ENCODE measurements at regions of chr7 and their contacts with region 1.

Region 1: DNA sequence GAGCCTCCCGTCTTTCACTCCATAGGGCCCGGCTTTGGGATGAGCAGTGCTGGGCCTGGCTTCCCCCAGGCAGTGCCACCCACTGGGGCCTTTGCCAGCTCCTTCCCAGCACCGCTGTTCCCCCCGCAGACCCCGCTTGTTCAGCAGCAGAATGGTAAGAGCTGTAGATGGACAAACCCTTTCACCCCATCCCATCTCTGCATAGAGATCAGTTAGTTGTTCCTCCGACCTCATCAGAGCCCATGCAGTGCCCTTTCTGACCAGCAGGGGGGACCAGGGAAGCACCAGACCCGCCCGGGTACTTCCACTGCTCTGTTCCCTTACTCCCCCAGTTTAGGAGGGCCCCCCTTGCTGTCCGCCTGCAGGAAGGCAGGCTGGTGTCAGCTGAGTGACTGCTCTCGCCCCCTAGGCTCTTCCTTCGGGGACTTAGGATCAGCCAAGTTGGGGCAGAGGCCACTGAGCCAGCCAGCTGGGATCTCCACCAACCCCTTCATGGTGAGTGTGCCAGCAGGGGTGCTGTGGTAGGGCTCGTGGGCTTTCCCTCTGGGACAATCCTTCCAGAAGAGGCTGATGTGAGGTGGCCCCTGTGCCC is 9.8 kb downstream of the SAP25 start:
- DNase-seq: peak; percentile 43
- H3K4me3 ChIP-seq: no peak overlapping the region
- H3K27ac ChIP-seq: no peak overlapping the region
- H3K4me1 ChIP-seq: no peaks in the 10 kb centered on the region
- H3K27me3 ChIP-seq: no peaks in the 10 kb centered on the region
- CTCF ChIP-seq: peak; percentile 95 to 97

Region 2: GRCh38 chr7:100177045-100178001 is 386.6 kb before region 1 on chr7 and contains the starts of genes GPC2 and STAG3:
- CTCF ChIA-PET with region 1: interaction called, 23 read pairs
- dilution Hi-C with region 1: no loop called
- in situ Hi-C with region 1: no loop called
- intact Hi-C with region 1: no loop called
- DNase-seq: peak; percentile 95
- H3K4me3 ChIP-seq: peak within 1 kb of the TSS; percentile 54 to 68 (median 60)
- H3K27ac ChIP-seq: no peak within 1 kb of the TSS
- H3K4me1 ChIP-seq: no peaks in the 10 kb centered on the region
- H3K27me3 ChIP-seq: no peaks in the 10 kb centered on the region
- CTCF ChIP-seq: no peak
- total RNA-seq, gene GPC2: 4.0 to 6.4 TPM
- total RNA-seq, gene STAG3: 0.33 to 2.7 TPM

Region 3: GRCh38 chr7:100464210-100464660 is 99.7 kb before region 1 on chr7 and contains the start of gene SPACDR:
- CTCF ChIA-PET with region 1: no interaction called
- dilution Hi-C with region 1: loop called (anchors 5 kb)
- in situ Hi-C with region 1: no loop called
- intact Hi-C with region 1: loop called (anchors 1 kb)
- DNase-seq: no peak
- H3K4me3 ChIP-seq: no peak within 1 kb of the TSS
- H3K27ac ChIP-seq: no peak within 1 kb of the TSS
- H3K4me1 ChIP-seq: no peaks in the 10 kb centered on the region
- H3K27me3 ChIP-seq: no peaks in the 10 kb centered on the region
- CTCF ChIP-seq: no peak
- total RNA-seq, gene SPACDR: 0.59 TPM in 1 of 2 donors, not detected in the other

Region 4: DNA sequence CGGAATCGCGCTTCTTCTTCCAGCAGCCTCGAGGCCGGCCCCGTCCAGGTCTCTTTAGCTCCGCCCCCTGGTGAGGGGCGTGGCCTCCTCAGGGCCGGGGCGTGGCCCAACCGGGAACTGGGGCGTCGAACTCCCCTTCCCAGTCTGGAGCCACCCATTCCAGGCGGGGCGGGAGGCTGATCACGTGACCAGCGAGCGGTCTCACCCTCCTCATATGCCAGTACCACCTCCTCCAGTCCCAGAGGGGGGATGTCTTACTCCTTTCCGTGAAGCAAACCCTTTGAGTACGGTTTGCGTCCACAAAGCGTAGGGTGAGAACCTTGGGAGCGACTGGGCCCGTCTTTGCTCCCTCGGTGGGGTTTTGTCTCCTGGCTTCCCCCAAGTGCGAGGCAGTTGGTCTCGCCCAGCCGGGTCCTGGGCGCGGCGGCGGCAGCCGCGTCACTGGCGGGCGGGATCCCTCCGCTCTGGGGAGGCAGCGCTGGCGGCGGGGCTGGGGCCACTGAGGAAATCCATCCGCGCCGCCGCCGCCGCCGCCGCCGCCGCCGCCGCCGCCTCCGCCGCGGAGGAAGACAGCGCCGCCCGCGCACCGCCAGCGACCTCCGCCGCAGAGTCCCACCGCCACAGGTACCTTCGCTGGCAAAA is 109.5 kb after region 1 on chr7 and contains the start of gene GNB2:
- CTCF ChIA-PET with region 1: interaction called, 3 read pairs
- dilution Hi-C with region 1: no loop called
- in situ Hi-C with region 1: no loop called
- intact Hi-C with region 1: loop called (anchors 5 kb)
- DNase-seq: peak; percentile 99
- H3K4me3 ChIP-seq: peak within 1 kb of the TSS; percentile 82 to 93 (median 84)
- H3K27ac ChIP-seq: peak within 1 kb of the TSS; percentile 89
- H3K4me1 ChIP-seq: peaks cover 5% of the 10 kb centered on the region
- H3K27me3 ChIP-seq: no peaks in the 10 kb centered on the region
- CTCF ChIP-seq: no peak
- total RNA-seq, gene GNB2: 91.4 to 243 TPM

Region 5: GRCh38 chr7:100874577-100875355 is 310.9 kb after region 1 on chr7 and contains the start of gene SRRT:
- CTCF ChIA-PET with region 1: no interaction called
- dilution Hi-C with region 1: no loop called
- in situ Hi-C with region 1: loop called in 1 of 2 experiments (anchors 25 kb)
- intact Hi-C with region 1: no loop called
- DNase-seq: peak; percentile 97
- H3K4me3 ChIP-seq: peak within 1 kb of the TSS; percentile 76 to 92 (median 89)
- H3K27ac ChIP-seq: peak within 1 kb of the TSS; percentile 79
- H3K4me1 ChIP-seq: peaks cover 21% of the 10 kb centered on the region
- H3K27me3 ChIP-seq: no peaks in the 10 kb centered on the region
- CTCF ChIP-seq: peak in 1 of 2 donors; percentile 39
- total RNA-seq, gene SRRT: 29.5 to 127 TPM